Cardiac septum (tissue), 1 donor: ENCODE measurements at regions of chr16 and their contacts with region 1.

Region 1: GRCh38 chr16:21599233-21600030 is at the start of gene METTL9:
- DNase-seq: peak; percentile 98
- total RNA-seq, gene METTL9: 56.1 TPM

Region 2: GRCh38 chr16:21644674-21645073 is 45.2 kb after region 1 on chr16:
- intact Hi-C with region 1: loop called (anchors 5 kb)
- DNase-seq: no peak